Panc1 (cell line): ENCODE measurements at regions of chr2 and their contacts with region 1.

Region 1: GRCh38 chr2:11411768-11412448 is 54.1 kb downstream of the E2F6 start:
- DNase-seq: peak; percentile 30
- ATAC-seq: peak; percentile 84
- H3K4me3 ChIP-seq: peak overlapping the region; percentile 40 to 43
- H3K27ac ChIP-seq: peak overlapping the region; percentile 31; the same call in 1 of the 2 replicates
- H3K4me1 ChIP-seq: peaks cover 9% of the 10 kb centered on the region; the same call in 1 of the 2 replicates
- H3K27me3 ChIP-seq: no peaks in the 10 kb centered on the region
- CTCF ChIP-seq: peak; percentile 91

Region 2: DNA sequence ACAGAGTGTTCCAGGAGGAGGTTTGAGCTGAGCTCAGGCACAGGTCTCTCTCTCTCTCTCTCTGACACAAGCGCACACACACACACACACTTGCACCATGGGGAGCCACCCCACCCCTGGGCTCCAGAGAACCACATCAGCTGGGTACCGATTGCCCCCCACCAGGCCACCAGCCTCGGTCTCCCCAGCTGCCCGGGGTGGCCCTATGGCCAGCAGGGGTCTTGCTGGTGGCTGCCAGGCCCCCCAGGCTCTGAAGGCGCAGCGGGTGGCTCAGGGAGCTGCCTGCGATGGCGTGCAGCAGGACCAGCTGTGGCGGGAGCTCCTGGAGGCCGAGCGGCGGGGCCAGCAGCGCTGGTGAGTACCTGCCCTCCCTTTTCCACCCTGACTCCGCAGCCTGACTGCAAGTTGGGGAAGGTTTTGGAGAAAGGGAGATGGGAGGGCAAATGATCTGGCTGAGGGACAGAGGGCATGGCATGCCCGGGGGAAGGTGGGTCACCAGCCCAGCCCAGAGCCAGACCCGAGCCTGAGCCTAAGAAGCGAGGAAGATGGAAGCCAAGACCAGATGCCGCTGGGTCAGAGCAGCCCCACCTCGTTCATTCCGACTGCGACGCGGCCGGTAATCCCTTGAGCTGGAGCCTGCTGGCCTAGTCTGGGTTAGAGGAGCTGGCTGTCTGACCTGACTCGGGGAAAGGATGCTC is 278.5 kb before region 1 on chr2:
- CTCF ChIA-PET with region 1: interaction called, 20 read pairs
- POLR2A ChIA-PET with region 1: no interaction called
- in situ Hi-C with region 1: no loop called
- intact Hi-C with region 1: no loop called
- DNase-seq: no peak
- ATAC-seq: no peak
- H3K4me3 ChIP-seq: peak overlapping the region; percentile 31 to 38
- H3K27ac ChIP-seq: peak overlapping the region; percentile 55
- H3K4me1 ChIP-seq: peaks cover 10% of the 10 kb centered on the region
- H3K27me3 ChIP-seq: no peaks in the 10 kb centered on the region; the same call in 1 of the 2 replicates
- CTCF ChIP-seq: no peak

Region 3: DNA sequence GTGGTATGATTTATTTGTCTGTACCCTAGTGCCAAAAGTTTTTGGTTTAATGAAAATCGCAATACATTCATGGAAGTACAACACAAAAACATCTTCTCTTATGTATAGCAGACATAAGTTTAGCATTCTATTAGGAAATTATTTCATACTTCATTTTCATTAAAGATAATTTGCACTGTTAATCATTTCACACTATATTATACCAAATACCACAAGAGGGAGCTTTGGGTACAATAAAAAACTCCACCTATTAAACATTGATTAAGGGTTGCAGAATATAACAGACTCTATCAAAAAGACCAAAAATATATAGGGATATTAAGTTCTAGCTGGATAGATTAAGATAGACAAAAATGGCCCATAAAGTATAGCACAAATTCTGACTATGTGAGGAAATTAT is 177.6 kb before region 1 on chr2:
- CTCF ChIA-PET with region 1: interaction called, 6 read pairs
- POLR2A ChIA-PET with region 1: interaction called, 3 read pairs
- in situ Hi-C with region 1: no loop called
- intact Hi-C with region 1: loop called (anchors 5 kb)
- DNase-seq: no peak
- ATAC-seq: no peak
- H3K4me3 ChIP-seq: no peak overlapping the region
- H3K27ac ChIP-seq: no peak overlapping the region
- H3K4me1 ChIP-seq: no peaks in the 10 kb centered on the region
- H3K27me3 ChIP-seq: no peaks in the 10 kb centered on the region
- CTCF ChIP-seq: peak; percentile 43; the same call in 1 of the 2 replicates

Region 4: GRCh38 chr2:11250400-11251196 is 161.3 kb before region 1 on chr2:
- CTCF ChIA-PET with region 1: interaction called, 8 read pairs
- POLR2A ChIA-PET with region 1: interaction called, 10 read pairs
- in situ Hi-C with region 1: no loop called
- intact Hi-C with region 1: no loop called
- DNase-seq: no peak
- ATAC-seq: no peak
- H3K4me3 ChIP-seq: no peak overlapping the region
- H3K27ac ChIP-seq: no peak overlapping the region
- H3K4me1 ChIP-seq: no peaks in the 10 kb centered on the region
- H3K27me3 ChIP-seq: no peaks in the 10 kb centered on the region
- CTCF ChIP-seq: no peak

Region 5: DNA sequence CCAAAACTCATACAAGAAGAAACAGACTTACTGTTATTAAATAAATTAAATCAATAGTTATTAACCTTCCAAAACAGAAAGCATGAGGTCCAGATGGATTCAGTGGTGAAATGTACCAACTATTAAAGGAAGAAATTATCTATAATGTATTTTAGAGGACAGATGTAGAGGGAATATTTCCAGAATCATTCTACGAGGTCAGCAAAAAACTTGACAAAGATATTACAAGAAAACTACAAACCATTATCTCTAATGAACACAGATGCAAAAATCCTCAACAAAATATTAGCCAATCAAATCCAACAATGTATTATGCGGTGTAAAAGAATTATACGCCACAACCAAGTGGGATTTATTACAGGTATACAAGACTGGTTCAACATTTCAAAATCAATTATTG is 131.2 kb before region 1 on chr2:
- CTCF ChIA-PET with region 1: interaction called, 14 read pairs
- POLR2A ChIA-PET with region 1: no interaction called
- in situ Hi-C with region 1: no loop called
- intact Hi-C with region 1: no loop called
- DNase-seq: no peak
- ATAC-seq: no peak
- H3K4me3 ChIP-seq: no peak overlapping the region
- H3K27ac ChIP-seq: no peak overlapping the region
- H3K4me1 ChIP-seq: no peaks in the 10 kb centered on the region
- H3K27me3 ChIP-seq: no peaks in the 10 kb centered on the region
- CTCF ChIP-seq: no peak

Region 6: GRCh38 chr2:11292464-11293255 is 119.2 kb before region 1 on chr2:
- CTCF ChIA-PET with region 1: no interaction called
- POLR2A ChIA-PET with region 1: no interaction called
- in situ Hi-C with region 1: no loop called
- intact Hi-C with region 1: no loop called
- DNase-seq: no peak
- ATAC-seq: peak; percentile 60
- H3K4me3 ChIP-seq: no peak overlapping the region
- H3K27ac ChIP-seq: peak overlapping the region; percentile 30; the same call in 1 of the 2 replicates
- H3K4me1 ChIP-seq: peaks cover 11% of the 10 kb centered on the region
- H3K27me3 ChIP-seq: no peaks in the 10 kb centered on the region
- CTCF ChIP-seq: no peak

Region 7: GRCh38 chr2:11344342-11344955 is 67.5 kb before region 1 on chr2 and contains the start of gene ROCK2:
- CTCF ChIA-PET with region 1: interaction called, 3 read pairs
- POLR2A ChIA-PET with region 1: no interaction called
- in situ Hi-C with region 1: no loop called
- intact Hi-C with region 1: loop called (anchors 5 kb)
- DNase-seq: no peak
- ATAC-seq: peak; percentile 88
- H3K4me3 ChIP-seq: peak within 1 kb of the TSS; percentile 90 to 95
- H3K27ac ChIP-seq: peak within 1 kb of the TSS; percentile 93
- H3K4me1 ChIP-seq: peaks cover 38% of the 10 kb centered on the region
- H3K27me3 ChIP-seq: no peaks in the 10 kb centered on the region
- CTCF ChIP-seq: no peak
- total RNA-seq, gene ROCK2: 47.9 TPM